ENCODE measurements at regions of chr4 and their contacts with region 1.

Region 1: GRCh38 chr4:10006231-10006600 is 15.1 kb downstream of the SLC2A9 start:
- DNase-seq: no peak
- H3K4me3 Mint-ChIP-seq: no peak overlapping the region
- H3K27ac Mint-ChIP-seq: no peak overlapping the region
- H3K4me1 Mint-ChIP-seq: peaks cover 15% of the 10 kb centered on the region
- H3K27me3 Mint-ChIP-seq: no peaks in the 10 kb centered on the region

Region 2: GRCh38 chr4:9608300-9608699 is 397.9 kb before region 1 on chr4:
- CTCF ChIA-PET with region 1: no interaction called
- POLR2A ChIA-PET with region 1: no interaction called
- intact Hi-C with region 1: loop called (anchors 10 kb)
- DNase-seq: peak; percentile 11
- H3K4me3 Mint-ChIP-seq: no peak overlapping the region
- H3K27ac Mint-ChIP-seq: no peak overlapping the region
- H3K4me1 Mint-ChIP-seq: peaks cover 41% of the 10 kb centered on the region
- H3K27me3 Mint-ChIP-seq: no peaks in the 10 kb centered on the region

Region 3: GRCh38 chr4:9825049-9825448 is 181.2 kb before region 1 on chr4:
- CTCF ChIA-PET with region 1: no interaction called
- POLR2A ChIA-PET with region 1: interaction called, 4 read pairs
- intact Hi-C with region 1: loop called (anchors 1 kb)
- DNase-seq: peak; percentile 65
- H3K4me3 Mint-ChIP-seq: no peak overlapping the region
- H3K27ac Mint-ChIP-seq: no peak overlapping the region
- H3K4me1 Mint-ChIP-seq: peaks cover 12% of the 10 kb centered on the region
- H3K27me3 Mint-ChIP-seq: peaks cover 9% of the 10 kb centered on the region

Region 4: DNA sequence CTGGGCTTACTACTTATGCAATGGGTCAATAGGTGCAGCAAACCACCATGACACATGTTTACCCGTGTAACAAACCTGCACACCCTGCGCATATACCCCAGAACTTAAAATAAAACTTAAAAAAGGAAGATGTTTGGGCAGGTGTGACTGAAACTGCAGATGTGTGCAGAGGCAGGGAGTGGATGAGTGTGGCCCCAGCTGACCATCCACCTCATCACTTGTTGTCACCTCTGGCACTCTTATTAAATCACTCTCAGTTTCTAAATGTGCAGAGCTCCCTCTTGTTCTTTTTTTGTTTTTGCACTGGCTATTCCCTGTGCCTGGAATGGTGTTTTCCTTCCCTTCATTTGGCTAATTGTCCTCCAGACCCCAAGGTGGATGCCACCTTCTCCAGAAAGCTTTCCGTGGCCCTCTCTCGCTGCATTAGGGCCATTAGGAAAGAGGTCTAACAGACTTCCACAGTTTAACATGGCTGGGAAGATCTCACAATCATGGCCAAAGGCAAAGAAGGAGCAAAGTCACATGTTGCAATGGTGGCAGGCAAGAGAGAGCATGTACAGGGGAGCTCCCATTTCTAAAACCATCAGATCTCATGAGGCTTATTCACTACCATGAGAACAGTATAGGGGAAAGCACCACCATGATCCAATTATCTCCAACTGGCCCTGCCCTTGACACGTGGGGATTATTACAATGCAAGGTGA is 43.5 kb before region 1 on chr4:
- CTCF ChIA-PET with region 1: no interaction called
- POLR2A ChIA-PET with region 1: no interaction called
- intact Hi-C with region 1: loop called (anchors 1 kb)
- DNase-seq: no peak
- H3K4me3 Mint-ChIP-seq: no peak overlapping the region
- H3K27ac Mint-ChIP-seq: no peak overlapping the region
- H3K4me1 Mint-ChIP-seq: no peaks in the 10 kb centered on the region
- H3K27me3 Mint-ChIP-seq: no peaks in the 10 kb centered on the region

Region 5: DNA sequence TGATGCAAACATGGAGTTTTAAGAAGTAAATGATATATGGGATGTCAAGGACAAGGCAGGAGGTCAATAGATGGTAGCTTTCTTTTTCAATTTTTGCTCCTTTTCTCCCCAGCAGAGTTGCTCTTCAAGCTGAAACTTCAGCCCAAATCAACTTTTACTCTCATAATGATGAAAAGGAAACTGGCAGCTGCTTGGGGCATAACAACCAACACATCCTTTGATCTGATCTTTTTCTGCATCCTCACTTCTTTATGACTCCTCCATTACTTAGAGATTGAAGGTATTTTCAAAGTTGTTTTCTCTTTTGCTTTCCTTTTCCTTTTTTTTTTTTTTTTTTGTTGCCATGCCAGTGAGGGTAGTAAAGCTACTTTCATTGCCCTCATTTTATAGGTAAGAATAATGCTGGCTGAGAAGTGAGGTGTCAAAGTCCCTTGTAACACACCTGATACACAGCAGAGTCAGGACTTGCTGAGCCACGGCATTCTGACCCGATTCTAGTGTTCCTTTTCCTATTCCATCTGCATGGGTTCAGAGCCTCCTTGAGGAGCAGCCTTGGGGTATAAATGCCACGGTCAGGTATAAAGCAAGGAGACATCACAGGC is 11.9 kb before region 1 on chr4:
- CTCF ChIA-PET with region 1: interaction called, 4 read pairs
- POLR2A ChIA-PET with region 1: no interaction called
- intact Hi-C with region 1: loop called (anchors 1 kb)
- DNase-seq: no peak
- H3K4me3 Mint-ChIP-seq: no peak overlapping the region
- H3K27ac Mint-ChIP-seq: peak overlapping the region; percentile 29
- H3K4me1 Mint-ChIP-seq: peaks cover 14% of the 10 kb centered on the region
- H3K27me3 Mint-ChIP-seq: no peaks in the 10 kb centered on the region

Region 6: DNA sequence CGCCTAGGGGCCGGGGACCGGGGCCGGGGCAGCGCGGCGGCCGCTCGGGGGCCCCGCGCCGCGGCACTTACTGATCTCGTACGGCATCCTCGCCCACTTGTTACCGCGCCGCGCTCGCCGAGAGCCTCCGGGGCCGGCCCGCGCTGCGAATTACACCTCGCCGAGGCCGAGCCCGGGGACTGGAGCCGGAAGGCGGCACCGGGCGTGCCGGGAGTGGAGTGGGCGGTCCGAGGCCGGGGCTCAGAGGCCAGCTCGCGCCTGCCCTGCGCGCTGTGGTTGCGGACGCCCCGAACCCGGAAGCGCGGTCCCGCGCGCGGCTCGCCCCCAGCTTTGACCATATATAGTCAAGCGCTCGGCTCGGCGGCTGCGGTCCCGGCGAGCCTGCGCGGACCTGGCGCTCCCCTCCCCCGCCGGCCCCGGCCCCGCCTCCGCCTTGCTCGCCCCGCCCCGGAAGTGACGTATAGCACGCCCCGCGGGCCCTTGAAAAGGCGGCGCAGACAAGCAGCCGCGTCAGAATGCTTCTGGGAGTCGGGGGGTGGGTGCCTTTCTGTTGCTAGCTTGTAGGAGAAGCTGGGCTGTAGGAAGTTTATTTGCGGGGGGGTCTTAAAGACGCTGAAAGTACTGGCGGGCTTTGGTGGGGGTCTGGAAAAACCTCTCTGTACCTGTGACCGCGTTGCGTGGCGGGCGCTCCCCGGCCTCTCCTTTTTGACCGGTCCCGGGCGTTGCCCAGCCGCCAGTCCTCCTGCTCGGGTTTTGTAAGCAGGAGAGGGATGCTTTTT is 110.6 kb after region 1 on chr4 and contains the start of gene WDR1:
- CTCF ChIA-PET with region 1: no interaction called
- POLR2A ChIA-PET with region 1: no interaction called
- intact Hi-C with region 1: no loop called
- DNase-seq: peak; percentile 96
- H3K4me3 Mint-ChIP-seq: peak within 1 kb of the TSS; percentile 94
- H3K27ac Mint-ChIP-seq: peak within 1 kb of the TSS; percentile 97
- H3K4me1 Mint-ChIP-seq: peaks cover 57% of the 10 kb centered on the region
- H3K27me3 Mint-ChIP-seq: no peaks in the 10 kb centered on the region
- total RNA-seq, gene WDR1: 351 to 353 TPM

Measured in activated CD4-positive, alpha-beta memory T cell treated with anti-CD3 and anti-CD28 coated beads for 36 hours (primary cell).